Activated T-helper 1 cell treated with anti-CD3 and anti-CD28 coated beads, Interleukin-12 subunit alpha, Interleukin-12 subunit beta, Interleukin-2, Interleukin-4 antibody, amounts not matched to agents 30 ng/mL and 10 ng/mL and 1 ng/mL, durations not matched to agents 14 hours and 24 hours and 36 hours (primary cell): ENCODE measurements at regions of chr1 and their contacts with region 1.

Region 1: DNA sequence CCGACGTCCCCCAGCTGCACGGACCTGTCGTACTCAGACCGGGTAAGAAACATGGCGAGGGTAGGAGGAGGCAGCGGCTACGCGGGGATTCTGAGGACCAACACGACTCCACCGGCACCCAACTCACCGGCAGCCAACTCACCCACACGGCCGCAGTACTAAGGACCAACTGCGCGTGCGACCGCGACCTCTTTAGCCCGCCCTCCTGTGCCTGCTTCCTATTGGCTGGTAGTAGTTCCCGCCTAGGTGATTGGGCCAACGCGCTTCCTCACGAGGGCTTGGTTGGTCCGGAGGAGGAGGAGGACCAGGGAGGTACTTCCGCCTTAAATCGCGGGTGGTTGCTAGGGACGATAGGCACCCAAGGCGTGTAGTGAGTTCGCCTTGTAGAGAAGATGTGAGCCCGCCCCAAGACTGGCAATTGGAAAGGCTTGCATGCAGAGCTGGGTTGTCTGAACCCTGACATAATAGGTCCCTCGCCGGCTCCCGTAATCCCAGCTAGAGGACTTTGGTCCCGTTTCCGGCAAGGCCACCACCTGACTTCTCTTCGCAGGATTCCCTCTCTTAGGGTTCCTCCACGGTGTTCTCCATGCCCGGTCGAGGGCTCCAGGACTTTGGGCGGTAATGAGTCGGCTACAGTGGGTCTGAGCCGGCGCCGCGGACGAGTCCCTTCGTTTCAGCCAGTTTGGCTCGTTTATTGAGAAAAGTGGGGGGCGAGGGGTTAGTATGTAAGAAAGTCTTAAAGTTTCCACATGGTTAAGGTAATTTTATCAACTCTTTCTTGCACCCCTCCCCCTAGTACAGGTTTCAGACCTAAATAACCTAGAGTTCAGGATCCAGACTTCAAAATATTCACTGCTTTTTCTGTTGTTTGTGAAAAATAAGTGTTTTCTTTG is at the start of gene PSMA5:
- DNase-seq: peak; percentile 94
- H3K4me3 Mint-ChIP-seq: peak within 1 kb of the TSS; percentile 97
- H3K27ac Mint-ChIP-seq: peak within 1 kb of the TSS; percentile 96
- H3K4me1 Mint-ChIP-seq: peaks cover 44% of the 10 kb centered on the region
- H3K27me3 Mint-ChIP-seq: peaks cover under 1% of the 10 kb centered on the region
- total RNA-seq, gene PSMA5: 241 and 283 TPM in 2 replicates

Region 2: DNA sequence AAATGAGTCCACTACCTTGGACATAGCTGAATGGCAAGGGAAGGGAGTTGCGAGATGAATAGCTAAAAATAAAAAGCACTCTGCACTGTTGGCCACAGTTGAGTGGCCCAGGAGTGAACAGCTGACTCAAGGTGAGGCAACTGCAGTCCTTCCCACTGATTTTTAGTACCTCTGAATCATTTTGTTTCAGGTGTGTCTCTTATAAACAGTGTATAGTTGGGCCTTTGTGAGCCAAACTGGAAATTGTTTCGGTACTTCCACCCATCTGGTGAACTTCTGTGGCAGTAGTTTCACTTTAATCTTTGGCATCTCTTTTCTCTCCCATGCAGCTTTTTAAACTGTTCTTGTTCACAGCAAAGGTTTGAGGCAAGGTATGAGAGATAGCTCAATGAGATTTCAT is 1584.3 kb before region 1 on chr1:
- intact Hi-C with region 1: no loop called
- DNase-seq: no peak
- H3K4me3 Mint-ChIP-seq: no peak overlapping the region
- H3K27ac Mint-ChIP-seq: no peak overlapping the region
- H3K4me1 Mint-ChIP-seq: peaks cover 41% of the 10 kb centered on the region
- H3K27me3 Mint-ChIP-seq: no peaks in the 10 kb centered on the region

Region 3: DNA sequence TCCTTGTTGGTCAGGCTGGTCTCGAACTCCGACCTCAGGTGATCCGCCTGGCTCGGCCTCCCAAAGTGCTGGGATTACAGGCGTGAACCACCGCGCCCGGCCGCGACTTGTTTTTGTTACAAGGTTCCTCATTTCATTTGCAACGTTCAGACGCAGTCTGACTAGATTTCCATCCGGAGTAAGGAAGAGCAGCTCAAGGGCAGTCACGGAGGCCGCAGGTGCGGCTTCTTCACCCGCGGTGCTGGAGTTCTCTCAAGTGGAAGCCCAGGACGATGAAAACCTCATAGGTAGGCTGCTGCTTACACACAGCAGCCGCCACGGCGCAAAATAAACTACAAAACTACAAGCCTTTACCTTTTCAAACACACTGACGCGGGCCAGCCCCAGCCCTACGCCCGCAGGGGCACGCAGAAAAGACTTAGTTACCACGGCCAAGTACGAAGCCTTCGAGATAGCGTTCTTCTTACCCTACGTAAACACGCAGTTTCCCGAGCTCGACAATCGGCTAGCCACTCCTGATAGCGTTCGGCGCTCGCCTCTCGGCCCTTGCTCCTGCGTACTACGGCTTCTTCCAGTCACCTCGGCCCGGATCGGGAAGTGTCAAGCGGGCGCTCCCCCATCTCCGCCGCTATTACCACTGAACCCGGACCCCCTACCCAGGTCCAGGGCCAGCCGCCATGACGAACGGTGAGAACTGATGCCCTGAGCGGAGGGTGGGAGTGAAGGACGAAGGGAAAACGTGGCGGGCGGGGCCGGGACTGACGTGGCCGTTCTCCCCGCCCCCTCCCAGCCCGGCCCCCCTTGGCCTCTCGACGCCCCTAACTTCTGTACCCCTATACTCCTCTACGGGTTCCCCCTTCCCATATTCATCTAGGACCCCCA is 336.1 kb before region 1 on chr1 and contains the start of gene TMEM167B:
- intact Hi-C with region 1: loop called (anchors 1 kb)
- DNase-seq: peak; percentile 84
- H3K4me3 Mint-ChIP-seq: peak within 1 kb of the TSS; percentile 92
- H3K27ac Mint-ChIP-seq: peak within 1 kb of the TSS; percentile 93
- H3K4me1 Mint-ChIP-seq: peaks cover 21% of the 10 kb centered on the region
- H3K27me3 Mint-ChIP-seq: peaks cover 2% of the 10 kb centered on the region
- total RNA-seq, gene TMEM167B: 26.2 and 27.6 TPM in 2 replicates

Region 4: GRCh38 chr1:109341944-109342930 is 84.3 kb before region 1 on chr1:
- intact Hi-C with region 1: no loop called
- DNase-seq: no peak
- H3K4me3 Mint-ChIP-seq: no peak overlapping the region
- H3K27ac Mint-ChIP-seq: no peak overlapping the region
- H3K4me1 Mint-ChIP-seq: peaks cover 6% of the 10 kb centered on the region
- H3K27me3 Mint-ChIP-seq: peaks cover 11% of the 10 kb centered on the region

Region 5: DNA sequence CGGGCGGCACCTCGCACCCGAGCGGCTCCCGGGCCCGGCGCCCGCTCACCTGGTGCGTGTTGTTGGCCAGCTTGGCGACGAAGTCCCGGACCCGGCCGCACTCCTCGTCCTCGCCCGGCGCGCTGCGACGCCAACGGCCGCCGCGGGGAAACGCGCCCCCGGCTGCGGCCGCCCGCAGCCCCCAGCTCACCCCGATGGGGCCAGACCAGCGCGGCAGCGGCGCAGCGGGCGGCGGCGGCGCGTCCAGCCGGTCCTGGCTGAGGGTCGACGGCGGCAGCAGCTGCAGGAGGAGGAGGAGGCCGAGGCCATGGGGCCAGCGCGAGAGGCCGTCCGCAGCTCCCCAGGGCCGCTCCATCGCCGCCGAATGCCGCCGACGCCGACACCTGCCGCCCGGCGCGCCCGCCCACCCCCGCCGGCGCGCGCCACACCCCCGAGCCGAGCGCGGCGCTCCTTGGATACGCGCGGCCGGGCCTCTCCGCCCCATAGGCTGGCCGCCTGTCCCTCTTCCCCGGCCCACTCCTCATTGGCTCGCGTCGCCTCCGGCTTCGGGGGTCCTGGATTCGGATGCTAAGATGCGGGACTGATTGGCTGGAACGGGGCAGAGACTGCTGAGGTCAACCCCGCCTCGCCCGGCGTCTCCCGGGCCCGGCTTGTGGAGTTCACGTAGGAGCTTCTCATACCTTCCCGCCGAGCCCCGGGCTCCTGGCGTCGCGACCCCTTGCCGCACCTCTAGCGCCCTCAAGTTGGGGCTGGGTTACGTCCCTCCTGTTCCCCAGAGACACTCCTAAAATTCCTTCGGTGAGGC is 28.8 kb before region 1 on chr1 and contains the start of gene SORT1:
- intact Hi-C with region 1: loop called (anchors 1 kb)
- DNase-seq: peak; percentile 45
- H3K4me3 Mint-ChIP-seq: peak within 1 kb of the TSS; percentile 86
- H3K27ac Mint-ChIP-seq: peak within 1 kb of the TSS; percentile 38
- H3K4me1 Mint-ChIP-seq: peaks cover 25% of the 10 kb centered on the region
- H3K27me3 Mint-ChIP-seq: peaks cover 42% of the 10 kb centered on the region
- total RNA-seq, gene SORT1: 1.4 and 1.5 TPM in 2 replicates

Region 6: GRCh38 chr1:109454497-109455133 is 28.1 kb after region 1 on chr1:
- intact Hi-C with region 1: no loop called
- DNase-seq: no peak
- H3K4me3 Mint-ChIP-seq: no peak overlapping the region
- H3K27ac Mint-ChIP-seq: no peak overlapping the region
- H3K4me1 Mint-ChIP-seq: no peaks in the 10 kb centered on the region
- H3K27me3 Mint-ChIP-seq: peaks cover 30% of the 10 kb centered on the region

Region 7: DNA sequence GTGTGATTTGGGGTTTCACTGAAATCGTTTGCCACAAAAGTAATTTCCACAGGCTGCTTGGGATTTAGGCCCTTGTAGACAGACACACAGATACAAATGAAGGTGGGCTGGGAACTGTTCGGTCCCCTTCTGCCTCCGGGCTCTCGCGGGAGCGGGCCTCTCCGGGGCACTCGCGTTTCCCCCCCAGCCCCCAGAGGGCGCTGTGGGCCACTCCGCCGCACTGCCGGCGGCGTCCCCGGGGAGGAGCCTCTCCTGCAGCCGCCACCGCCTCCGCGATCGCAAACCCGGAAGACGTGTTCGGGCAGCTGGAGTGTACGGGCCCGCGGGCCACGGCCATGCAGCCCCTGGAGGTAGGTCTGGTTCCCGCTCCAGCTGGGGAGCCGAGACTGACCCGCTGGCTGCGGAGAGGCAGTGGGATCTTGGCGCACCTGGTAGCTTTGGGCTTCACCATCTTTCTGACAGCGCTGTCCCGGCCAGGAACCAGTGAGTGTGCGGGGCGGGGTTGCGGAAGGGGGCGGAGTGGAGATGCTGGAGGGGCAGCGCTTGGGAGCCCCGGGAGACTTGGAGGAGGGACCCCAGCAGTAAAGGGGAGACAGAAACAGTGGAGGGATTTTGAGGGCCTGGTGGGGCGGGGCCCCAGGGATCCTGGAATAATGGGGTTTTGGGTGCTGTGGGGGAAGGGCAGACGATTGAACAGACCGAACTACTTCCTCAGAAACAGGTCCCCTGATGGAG is 67.4 kb after region 1 on chr1 and contains the start of gene CYB561D1:
- intact Hi-C with region 1: loop called (anchors 1 kb)
- DNase-seq: peak; percentile 87
- H3K4me3 Mint-ChIP-seq: peak within 1 kb of the TSS; percentile 96
- H3K27ac Mint-ChIP-seq: peak within 1 kb of the TSS; percentile 71
- H3K4me1 Mint-ChIP-seq: peaks cover 34% of the 10 kb centered on the region
- H3K27me3 Mint-ChIP-seq: no peaks in the 10 kb centered on the region
- total RNA-seq, gene CYB561D1: 12.6 and 13.4 TPM in 2 replicates

Region 8: DNA sequence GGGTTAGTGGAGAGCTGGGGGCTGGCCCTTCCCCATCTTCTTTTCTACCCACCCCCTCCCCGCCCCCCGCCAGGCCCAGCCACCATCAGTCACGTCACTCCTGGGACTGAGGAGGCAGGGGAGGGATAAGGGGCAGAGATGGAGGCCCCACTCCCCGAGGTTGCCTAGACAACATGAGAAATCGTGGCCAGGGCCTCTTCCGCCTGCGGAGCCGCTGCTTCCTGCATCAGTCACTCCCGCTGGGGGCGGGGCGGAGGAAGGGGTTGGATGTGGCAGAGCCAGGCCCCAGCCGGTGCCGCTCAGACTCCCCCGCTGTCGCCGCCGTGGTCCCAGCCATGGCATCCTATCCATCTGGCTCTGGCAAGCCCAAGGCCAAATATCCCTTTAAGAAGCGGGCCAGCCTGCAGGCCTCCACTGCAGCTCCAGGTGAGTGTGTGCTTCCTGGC is 194.3 kb after region 1 on chr1:
- intact Hi-C with region 1: loop called (anchors 1 kb)
- DNase-seq: peak; percentile 96
- H3K4me3 Mint-ChIP-seq: peak overlapping the region; percentile 95
- H3K27ac Mint-ChIP-seq: peak overlapping the region; percentile 97
- H3K4me1 Mint-ChIP-seq: peaks cover 64% of the 10 kb centered on the region
- H3K27me3 Mint-ChIP-seq: peaks cover 2% of the 10 kb centered on the region

Region 9: DNA sequence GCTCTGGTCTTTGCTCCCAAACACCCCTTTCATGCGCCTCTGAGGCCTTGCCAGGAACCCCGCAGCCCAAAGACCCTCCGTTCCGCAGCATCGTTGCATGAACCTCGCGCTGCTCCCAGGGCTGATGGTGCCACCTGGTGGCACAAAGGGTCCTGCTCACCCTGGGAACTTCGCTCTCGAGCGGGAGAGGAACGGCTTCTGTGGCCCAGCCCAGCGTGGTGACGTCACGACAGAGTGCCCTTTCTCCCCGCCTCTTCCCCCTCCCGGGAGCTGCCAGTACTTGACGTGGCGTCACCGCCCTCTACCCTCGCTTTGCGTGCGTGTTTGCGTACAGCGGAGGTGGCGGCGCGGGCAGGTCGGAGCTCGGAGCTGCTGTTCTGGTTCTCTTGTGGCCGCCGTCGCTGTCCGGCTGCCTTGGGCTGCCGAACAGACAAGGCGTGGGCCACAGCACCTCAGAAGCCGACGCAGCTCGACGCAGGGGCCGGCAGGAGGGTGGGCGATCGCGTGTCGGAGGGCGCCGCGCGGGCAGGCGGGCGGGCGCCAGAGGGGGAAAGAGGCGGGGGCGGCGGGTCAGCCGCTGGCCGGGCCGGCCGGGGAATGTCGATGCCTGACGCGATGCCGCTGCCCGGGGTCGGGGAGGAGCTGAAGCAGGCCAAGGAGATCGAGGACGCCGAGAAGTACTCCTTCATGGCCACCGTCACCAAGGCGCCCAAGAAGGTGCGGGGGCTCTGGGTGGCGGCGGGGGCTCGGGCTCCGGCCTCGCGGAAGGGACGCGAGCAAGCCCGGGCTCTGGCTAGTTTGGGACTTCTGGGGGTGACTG is 558.1 kb after region 1 on chr1 and contains the start of gene AHCYL1:
- intact Hi-C with region 1: loop called (anchors 2 kb)
- DNase-seq: peak; percentile 99
- H3K4me3 Mint-ChIP-seq: peak within 1 kb of the TSS; percentile 93
- H3K27ac Mint-ChIP-seq: peak within 1 kb of the TSS; percentile 97
- H3K4me1 Mint-ChIP-seq: peaks cover 36% of the 10 kb centered on the region
- H3K27me3 Mint-ChIP-seq: peaks cover 4% of the 10 kb centered on the region
- total RNA-seq, gene AHCYL1: 63.8 and 64.1 TPM in 2 replicates